HCT116 (cell line): ENCODE measurements at regions of chr10 and their contacts with region 1.

Region 1: DNA sequence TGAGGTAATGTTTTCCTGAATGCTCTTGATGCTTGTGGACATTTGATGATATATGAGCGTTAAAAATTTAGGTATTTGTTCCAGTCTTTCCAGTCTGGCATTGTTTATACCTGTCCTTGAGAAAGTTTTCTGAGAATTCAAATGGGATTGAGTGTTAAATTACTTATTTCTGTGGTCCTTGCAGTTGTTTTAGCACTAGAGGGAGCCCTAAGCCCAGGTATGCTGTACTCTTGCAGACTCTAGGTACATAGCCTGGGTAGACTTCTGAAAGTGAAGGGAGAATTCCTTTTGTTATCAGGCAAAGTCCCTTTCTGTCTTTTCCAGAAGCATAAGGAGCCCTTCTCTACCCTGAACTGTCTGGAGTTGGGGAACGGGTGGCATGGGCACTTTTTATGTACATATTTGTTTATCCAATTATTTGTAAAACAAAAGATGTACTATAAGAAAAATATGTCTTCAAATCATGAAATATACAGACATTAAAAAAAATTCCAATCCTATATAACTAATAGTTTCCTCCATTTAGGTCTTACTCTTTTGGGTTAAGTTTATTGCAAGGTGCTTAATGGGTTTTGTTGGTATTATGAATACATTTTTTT is 262.1 kb downstream of the ATRNL1 start:
- DNase-seq: peak; percentile 81
- ATAC-seq: peak; percentile 96
- H3K4me3 ChIP-seq: no peak overlapping the region
- H3K27ac ChIP-seq: no peak overlapping the region
- H3K4me1 ChIP-seq: no peaks in the 10 kb centered on the region
- H3K27me3 ChIP-seq: peaks cover 5% of the 10 kb centered on the region; the same call in 1 of the 2 replicates
- CTCF ChIP-seq: peak; percentile 77 to 93 (median 84); a peak in 5 of 6 replicates
- POLR2A ChIP-seq: no peak
- RAD21 ChIP-seq: peak; percentile 95

Region 2: DNA sequence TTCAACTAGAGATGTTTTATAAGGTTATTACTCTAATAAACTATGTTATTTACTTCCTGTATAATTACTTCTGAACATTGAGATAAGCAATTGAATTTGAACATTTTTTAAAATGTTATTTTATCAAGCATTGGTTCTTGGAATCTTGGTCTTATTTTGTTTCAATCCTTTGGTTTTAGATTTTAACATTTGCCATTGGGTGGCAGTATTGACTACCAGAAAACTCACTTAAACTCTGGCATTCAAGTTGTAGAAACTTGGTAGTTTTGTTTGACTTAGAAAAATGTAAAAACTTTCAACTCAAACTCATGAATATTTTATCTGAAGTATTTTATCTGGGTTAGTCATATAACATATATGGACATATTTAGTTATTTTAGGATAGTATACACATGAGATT is 214.0 kb before region 1 on chr10:
- CTCF ChIA-PET with region 1: interaction called, 4 read pairs
- POLR2A ChIA-PET with region 1: no interaction called
- RAD21 ChIA-PET with region 1: no interaction called
- intact Hi-C with region 1: loop called (anchors 5 kb)
- DNase-seq: peak; percentile 15
- ATAC-seq: no peak
- H3K4me3 ChIP-seq: no peak overlapping the region
- H3K27ac ChIP-seq: no peak overlapping the region
- H3K4me1 ChIP-seq: no peaks in the 10 kb centered on the region
- H3K27me3 ChIP-seq: peaks cover 36% of the 10 kb centered on the region
- CTCF ChIP-seq: peak; percentile 50 to 70 (median 58); a peak in 4 of 6 replicates
- POLR2A ChIP-seq: no peak
- RAD21 ChIP-seq: peak; percentile 72

Region 3: DNA sequence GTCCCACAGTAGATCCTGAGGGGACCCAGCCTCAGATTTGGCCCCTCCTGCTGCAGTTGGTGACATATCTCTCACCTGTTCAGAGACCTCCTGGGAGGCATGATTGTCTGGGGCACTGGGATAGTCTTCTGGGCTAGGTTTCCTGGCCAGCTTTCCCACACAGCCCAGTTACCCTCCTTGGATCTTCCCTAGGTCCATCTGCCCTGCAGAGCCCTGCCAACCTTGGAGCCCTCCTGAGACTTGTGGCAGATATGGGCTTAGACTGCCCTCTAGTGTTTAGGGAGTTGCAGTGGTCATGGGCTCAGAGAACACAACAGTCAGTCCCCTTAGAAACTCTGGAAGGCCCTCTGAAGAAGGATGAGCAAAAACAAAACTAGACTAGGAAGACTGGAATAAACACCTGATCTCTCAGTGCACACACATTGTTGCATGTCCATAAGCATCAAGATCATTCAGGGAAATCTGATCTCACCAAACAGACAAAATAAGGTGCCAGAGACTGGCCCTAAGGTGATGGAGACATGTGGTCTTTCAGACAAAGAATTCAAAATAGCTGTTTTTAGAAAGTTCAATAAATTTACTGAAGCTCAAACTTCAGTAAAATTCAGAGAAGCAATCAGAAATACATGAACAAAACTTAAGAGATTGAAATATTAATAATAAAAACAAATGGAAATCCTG is 62.5 kb after region 1 on chr10:
- CTCF ChIA-PET with region 1: interaction called, 8 read pairs
- POLR2A ChIA-PET with region 1: no interaction called
- RAD21 ChIA-PET with region 1: interaction called in 1 of 2 experiments, 3 read pairs
- intact Hi-C with region 1: loop called (anchors 1 kb)
- DNase-seq: peak; percentile 66
- ATAC-seq: peak; percentile 100
- H3K4me3 ChIP-seq: no peak overlapping the region
- H3K27ac ChIP-seq: no peak overlapping the region
- H3K4me1 ChIP-seq: no peaks in the 10 kb centered on the region
- H3K27me3 ChIP-seq: peaks cover 16% of the 10 kb centered on the region; the same call in 1 of the 2 replicates
- CTCF ChIP-seq: peak; percentile 85 to 95 (median 93)
- POLR2A ChIP-seq: no peak
- RAD21 ChIP-seq: peak; percentile 92

Region 4: GRCh38 chr10:115491526-115492140 is 136.4 kb after region 1 on chr10:
- CTCF ChIA-PET with region 1: no interaction called
- POLR2A ChIA-PET with region 1: no interaction called
- RAD21 ChIA-PET with region 1: no interaction called
- intact Hi-C with region 1: no loop called
- DNase-seq: no peak
- ATAC-seq: no peak
- H3K4me3 ChIP-seq: no peak overlapping the region
- H3K27ac ChIP-seq: no peak overlapping the region
- H3K4me1 ChIP-seq: no peaks in the 10 kb centered on the region
- H3K27me3 ChIP-seq: peaks cover 14% of the 10 kb centered on the region
- CTCF ChIP-seq: no peak
- POLR2A ChIP-seq: no peak
- RAD21 ChIP-seq: no peak

Region 5: GRCh38 chr10:115572706-115573455 is 217.6 kb after region 1 on chr10:
- CTCF ChIA-PET with region 1: interaction called, 3 read pairs
- POLR2A ChIA-PET with region 1: no interaction called
- RAD21 ChIA-PET with region 1: no interaction called
- intact Hi-C with region 1: loop called (anchors 1 kb)
- DNase-seq: peak; percentile 7
- ATAC-seq: peak; percentile 96
- H3K4me3 ChIP-seq: no peak overlapping the region
- H3K27ac ChIP-seq: no peak overlapping the region
- H3K4me1 ChIP-seq: no peaks in the 10 kb centered on the region
- H3K27me3 ChIP-seq: peaks cover under 1% of the 10 kb centered on the region; the same call in 1 of the 2 replicates
- CTCF ChIP-seq: peak; percentile 24 to 79 (median 78); a peak in 5 of 6 replicates
- POLR2A ChIP-seq: no peak
- RAD21 ChIP-seq: peak; percentile 41

Region 6: DNA sequence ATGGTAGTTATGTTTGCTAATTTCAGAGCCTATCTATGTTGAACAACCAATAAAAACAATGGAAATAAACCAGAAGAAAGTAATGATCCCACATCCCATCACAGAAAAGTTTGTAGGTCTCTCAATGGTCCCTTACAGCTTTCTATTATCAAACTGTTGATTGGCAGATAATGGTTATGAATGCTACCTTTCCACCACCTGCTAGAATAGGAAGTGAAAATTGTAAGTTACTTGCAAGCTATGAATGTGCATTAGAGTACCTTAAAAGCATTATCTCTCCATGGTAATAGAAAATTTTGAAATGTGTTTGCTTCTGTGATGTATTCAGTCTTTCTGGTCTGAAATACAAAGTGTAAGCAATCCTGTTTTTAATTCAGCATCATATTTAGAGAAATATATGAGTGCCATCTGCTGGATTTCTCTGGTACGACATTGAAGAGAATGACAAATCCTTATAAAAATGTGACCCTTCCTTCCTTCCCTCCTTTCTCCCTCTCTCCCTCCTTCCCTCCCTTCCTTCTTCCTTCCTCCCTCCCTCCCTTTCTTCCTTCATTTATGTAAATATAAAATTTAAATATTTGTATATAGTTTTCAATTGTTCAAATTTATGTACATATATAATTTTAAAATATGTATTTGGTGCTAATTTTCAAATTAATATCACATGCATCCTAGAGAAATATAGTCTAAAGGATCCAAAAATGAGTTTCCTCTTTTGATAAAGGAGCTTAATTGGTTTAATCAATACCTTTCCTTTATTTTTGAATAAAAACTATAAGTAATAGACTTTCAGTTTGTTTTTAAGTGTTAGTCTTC is 1030.9 kb after region 1 on chr10:
- CTCF ChIA-PET with region 1: no interaction called
- POLR2A ChIA-PET with region 1: no interaction called
- RAD21 ChIA-PET with region 1: no interaction called
- intact Hi-C with region 1: loop called (anchors 1 kb)
- DNase-seq: peak; percentile 22
- ATAC-seq: peak; percentile 77
- H3K4me3 ChIP-seq: no peak overlapping the region
- H3K27ac ChIP-seq: no peak overlapping the region
- H3K4me1 ChIP-seq: no peaks in the 10 kb centered on the region
- H3K27me3 ChIP-seq: peaks cover 73% of the 10 kb centered on the region
- CTCF ChIP-seq: peak; percentile 44 to 65 (median 46); a peak in 5 of 6 replicates
- POLR2A ChIP-seq: no peak
- RAD21 ChIP-seq: peak; percentile 74

Region 7: GRCh38 chr10:116490028-116490662 is 1134.9 kb after region 1 on chr10:
- CTCF ChIA-PET with region 1: no interaction called
- POLR2A ChIA-PET with region 1: no interaction called
- RAD21 ChIA-PET with region 1: no interaction called
- intact Hi-C with region 1: loop called (anchors 10 kb)
- DNase-seq: peak; percentile 28
- ATAC-seq: peak; percentile 82
- H3K4me3 ChIP-seq: no peak overlapping the region
- H3K27ac ChIP-seq: no peak overlapping the region
- H3K4me1 ChIP-seq: no peaks in the 10 kb centered on the region
- H3K27me3 ChIP-seq: peaks cover 23% of the 10 kb centered on the region
- CTCF ChIP-seq: peak; percentile 60 to 94 (median 61)
- POLR2A ChIP-seq: no peak
- RAD21 ChIP-seq: peak; percentile 63